Left colon (tissue), 2 donors: ENCODE measurements at regions of chr6 and their contacts with region 1.

Region 1: DNA sequence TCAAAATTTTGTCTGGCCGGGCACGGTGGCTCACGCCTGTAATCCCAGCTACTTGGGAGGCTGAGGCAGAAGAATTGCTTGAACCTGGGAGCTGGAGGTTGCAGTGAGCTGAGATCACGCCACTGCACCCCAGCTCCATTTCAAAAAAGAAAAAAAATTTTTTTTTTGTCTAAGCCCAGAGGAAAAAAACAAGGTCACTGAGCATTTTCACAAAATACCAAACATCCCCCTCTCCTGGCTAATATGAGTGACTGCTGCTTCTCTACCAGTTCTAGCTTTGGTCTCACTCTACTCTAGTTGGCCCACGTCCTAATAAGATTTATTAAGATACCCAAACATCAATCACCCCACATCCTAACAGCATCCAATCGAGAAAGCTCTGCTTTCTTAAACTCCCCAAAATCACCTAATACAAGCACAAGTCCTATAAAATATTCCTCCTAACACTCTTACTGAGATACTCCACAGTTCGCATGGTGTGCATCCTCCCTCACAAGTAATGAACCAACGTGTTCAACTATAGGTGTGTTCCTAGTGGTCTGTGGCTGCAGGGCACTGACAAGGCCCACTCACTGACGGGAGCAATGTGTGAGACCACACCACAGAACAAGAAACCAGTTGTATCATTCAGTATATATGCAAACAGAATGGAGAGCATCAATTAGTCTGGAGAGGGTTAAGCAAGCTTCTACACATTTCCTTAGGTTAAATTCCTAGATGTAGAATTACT is 64.2 kb downstream of the FKBP5 start:
- DNase-seq: no peak
- ATAC-seq: no peak

Region 2: DNA sequence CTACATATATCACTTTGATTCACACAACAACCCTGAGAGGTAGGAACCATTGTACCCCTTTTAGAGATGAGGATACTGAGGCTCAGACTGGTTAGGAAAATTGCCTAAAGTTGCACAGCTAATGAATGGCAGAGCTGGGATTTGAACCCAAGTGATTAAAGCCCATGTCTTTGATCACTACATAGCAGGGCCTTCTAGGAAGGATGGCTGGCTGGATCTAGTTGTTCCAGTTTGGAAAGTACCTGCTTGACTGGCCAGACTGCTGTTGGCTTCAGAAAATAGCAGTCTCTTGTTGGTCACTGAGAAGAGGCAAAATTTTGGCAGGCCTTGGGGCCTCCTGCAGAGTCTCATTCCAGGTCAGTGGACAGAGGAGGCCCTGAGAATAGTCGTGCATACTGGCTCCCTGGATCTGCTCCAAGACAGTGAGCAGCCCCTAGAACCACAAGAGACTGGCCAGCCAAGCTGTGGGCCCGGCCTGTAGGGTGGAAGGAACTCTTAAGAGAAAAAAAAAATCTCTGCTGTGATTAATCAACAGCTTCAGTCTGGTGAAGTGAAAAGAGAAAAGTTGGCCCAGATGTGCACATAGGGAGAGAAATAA is 264.7 kb before region 1 on chr6:
- intact Hi-C with region 1: no loop called
- DNase-seq: peak in 1 of 2 donors; percentile 37
- ATAC-seq: no peak

Region 3: GRCh38 chr6:35669451-35670045 is 45.0 kb after region 1 on chr6:
- intact Hi-C with region 1: loop called in 1 of 2 experiments (anchors 10 kb)
- DNase-seq: no peak
- ATAC-seq: peak; percentile 91

Region 4: GRCh38 chr6:36067374-36068011 is 443.0 kb after region 1 on chr6:
- intact Hi-C with region 1: no loop called
- DNase-seq: no peak
- ATAC-seq: peak; percentile 54